ENCODE measurements at regions of chr11 and their contacts with region 1.

Region 1: DNA sequence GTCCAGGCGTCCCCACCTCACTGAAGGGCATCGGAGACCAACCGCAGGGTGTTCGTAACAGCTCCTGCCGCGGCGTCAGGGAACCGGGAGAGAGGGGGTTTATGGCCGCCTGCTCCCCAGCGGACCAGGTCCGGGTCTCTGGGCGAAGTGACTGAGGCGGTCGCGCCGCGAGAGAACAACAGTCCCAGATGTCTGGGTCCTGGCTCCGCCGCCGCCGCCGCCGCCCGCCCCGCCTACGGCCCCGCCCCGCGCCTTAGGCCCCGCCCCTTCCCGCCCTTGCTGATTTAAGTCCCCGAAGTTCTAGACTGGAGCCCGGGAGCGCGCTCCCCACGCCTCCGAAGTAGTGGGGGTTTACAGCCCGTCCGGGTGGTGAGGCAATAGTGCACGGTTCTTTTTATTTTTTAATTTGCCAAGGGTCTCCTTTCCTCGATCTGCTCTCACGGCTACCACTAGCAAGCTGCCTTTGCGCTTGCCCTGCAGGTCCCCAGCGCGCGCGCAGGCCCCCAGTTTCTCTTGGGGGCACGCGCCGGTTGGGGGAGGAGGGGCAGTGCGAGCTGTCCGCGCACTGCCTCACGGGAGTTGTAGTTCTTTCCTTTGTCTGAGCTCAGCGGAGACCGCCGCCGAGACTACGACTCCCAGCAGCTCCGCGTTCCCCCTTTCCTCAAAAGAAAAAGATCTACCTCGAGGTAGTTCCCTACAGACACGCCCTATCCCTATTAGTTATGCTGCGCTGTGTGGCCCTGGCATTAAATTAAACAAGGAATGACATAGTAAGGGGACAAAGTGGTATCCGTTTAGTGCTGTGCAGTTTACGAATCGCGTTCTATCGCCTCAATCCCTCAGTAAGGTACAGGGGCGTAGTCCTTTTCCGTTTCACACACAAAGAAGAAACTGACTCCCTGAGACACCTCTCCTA is at the start of gene PGM2L1:
- DNase-seq: peak; percentile 86 to 97
- H3K4me3 ChIP-seq: peak within 1 kb of the TSS; percentile 92 to 95
- H3K27ac ChIP-seq: peak within 1 kb of the TSS; percentile 83 to 86
- H3K4me1 ChIP-seq: no peaks in the 10 kb centered on the region
- H3K27me3 ChIP-seq: no peaks in the 10 kb centered on the region
- CTCF ChIP-seq: no peak
- total RNA-seq, gene PGM2L1: 8.4 TPM

Region 2: GRCh38 chr11:74090701-74091100 is 307.8 kb before region 1 on chr11:
- intact Hi-C with region 1: no loop called
- DNase-seq: no peak
- H3K4me3 ChIP-seq: no peak overlapping the region
- H3K27ac ChIP-seq: no peak overlapping the region
- H3K4me1 ChIP-seq: no peaks in the 10 kb centered on the region
- H3K27me3 ChIP-seq: no peaks in the 10 kb centered on the region
- CTCF ChIP-seq: no peak

Region 3: GRCh38 chr11:74179234-74180052 is 219.1 kb before region 1 on chr11:
- intact Hi-C with region 1: no loop called
- DNase-seq: no peak
- H3K4me3 ChIP-seq: no peak overlapping the region
- H3K27ac ChIP-seq: peak overlapping the region; percentile 31 to 51
- H3K4me1 ChIP-seq: peaks cover 0 to 9% of the 10 kb centered on the region in 2 donors
- H3K27me3 ChIP-seq: no peaks in the 10 kb centered on the region
- CTCF ChIP-seq: no peak

Region 4: DNA sequence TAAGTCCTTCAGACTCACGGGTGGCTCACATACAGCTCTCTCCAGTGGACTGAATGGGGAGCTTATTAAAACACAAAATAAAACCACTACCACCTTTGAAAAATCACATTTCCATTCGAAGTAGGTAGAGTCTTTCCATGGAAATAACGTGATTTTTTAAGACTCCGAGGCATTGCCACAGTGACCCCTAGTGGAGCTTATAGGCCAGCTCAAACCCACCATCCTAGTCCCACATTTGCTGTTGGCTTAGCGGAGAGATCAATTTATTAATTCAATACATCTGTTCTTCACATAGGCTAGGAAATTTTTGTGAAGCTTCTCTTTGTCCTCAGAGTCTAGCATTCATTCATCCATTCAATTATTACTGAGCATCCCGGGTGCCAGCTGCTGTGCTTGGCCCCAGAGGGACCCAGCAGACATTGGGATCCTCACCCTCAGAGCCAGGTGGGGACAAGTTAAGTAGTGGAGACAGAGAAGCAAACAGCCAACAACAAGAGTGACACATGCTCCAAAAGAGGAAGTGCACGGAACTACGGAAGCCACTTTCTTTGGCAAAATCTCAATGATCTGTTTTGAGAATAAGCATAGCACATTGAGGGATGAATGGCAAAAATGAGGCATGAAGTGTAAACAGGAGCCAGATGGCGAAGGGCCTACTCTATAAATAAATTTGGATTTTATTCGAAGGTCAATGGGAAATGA is 76.9 kb before region 1 on chr11:
- intact Hi-C with region 1: loop called (anchors 2 kb)
- DNase-seq: peak in 1 of 2 donors; percentile 77
- H3K4me3 ChIP-seq: no peak overlapping the region
- H3K27ac ChIP-seq: peak overlapping the region; percentile 7 to 57
- H3K4me1 ChIP-seq: peaks cover 6 to 43% of the 10 kb centered on the region in 2 donors
- H3K27me3 ChIP-seq: no peaks in the 10 kb centered on the region
- CTCF ChIP-seq: peak in 1 of 3 experiments; percentile 60

Region 5: DNA sequence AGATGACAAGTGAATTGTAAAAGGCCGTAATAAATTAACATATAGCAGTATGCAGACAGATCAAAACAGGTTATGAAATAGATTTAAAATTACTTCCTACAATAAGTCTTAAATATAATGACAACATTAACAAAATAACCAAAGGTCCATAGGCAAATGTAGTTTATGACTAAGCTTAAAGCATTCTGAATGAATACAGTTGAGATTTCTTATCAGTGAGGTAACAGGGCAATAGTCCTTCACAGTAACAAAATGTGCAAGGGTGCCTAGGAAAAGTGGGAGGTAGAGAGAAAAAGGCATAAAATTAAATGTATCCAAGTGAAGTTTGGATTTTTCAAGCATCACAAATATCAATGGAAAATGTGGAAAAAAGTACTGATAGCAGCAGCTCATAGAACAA is 66.2 kb before region 1 on chr11:
- intact Hi-C with region 1: no loop called
- DNase-seq: no peak
- H3K4me3 ChIP-seq: no peak overlapping the region
- H3K27ac ChIP-seq: no peak overlapping the region
- H3K4me1 ChIP-seq: peaks cover 0 to 10% of the 10 kb centered on the region in 2 donors
- H3K27me3 ChIP-seq: no peaks in the 10 kb centered on the region
- CTCF ChIP-seq: no peak

Region 6: GRCh38 chr11:74418509-74418895 is 20.0 kb after region 1 on chr11:
- intact Hi-C with region 1: loop called (anchors 1 kb)
- DNase-seq: no peak
- H3K4me3 ChIP-seq: no peak overlapping the region
- H3K27ac ChIP-seq: peak overlapping the region; percentile 84 to 94
- H3K4me1 ChIP-seq: peaks cover 6 to 11% of the 10 kb centered on the region in 2 donors
- H3K27me3 ChIP-seq: no peaks in the 10 kb centered on the region
- CTCF ChIP-seq: no peak

Region 7: GRCh38 chr11:74492974-74493790 is 94.7 kb after region 1 on chr11 and contains the start of gene LIPT2:
- intact Hi-C with region 1: loop called (anchors 1 kb)
- DNase-seq: peak; percentile 89 to 97
- H3K4me3 ChIP-seq: peak within 1 kb of the TSS; percentile 64 to 95
- H3K27ac ChIP-seq: peak within 1 kb of the TSS; percentile 90 to 99
- H3K4me1 ChIP-seq: peaks cover 0 to 6% of the 10 kb centered on the region in 2 donors
- H3K27me3 ChIP-seq: no peaks in the 10 kb centered on the region
- CTCF ChIP-seq: no peak
- total RNA-seq, gene LIPT2: not detected

Region 8: DNA sequence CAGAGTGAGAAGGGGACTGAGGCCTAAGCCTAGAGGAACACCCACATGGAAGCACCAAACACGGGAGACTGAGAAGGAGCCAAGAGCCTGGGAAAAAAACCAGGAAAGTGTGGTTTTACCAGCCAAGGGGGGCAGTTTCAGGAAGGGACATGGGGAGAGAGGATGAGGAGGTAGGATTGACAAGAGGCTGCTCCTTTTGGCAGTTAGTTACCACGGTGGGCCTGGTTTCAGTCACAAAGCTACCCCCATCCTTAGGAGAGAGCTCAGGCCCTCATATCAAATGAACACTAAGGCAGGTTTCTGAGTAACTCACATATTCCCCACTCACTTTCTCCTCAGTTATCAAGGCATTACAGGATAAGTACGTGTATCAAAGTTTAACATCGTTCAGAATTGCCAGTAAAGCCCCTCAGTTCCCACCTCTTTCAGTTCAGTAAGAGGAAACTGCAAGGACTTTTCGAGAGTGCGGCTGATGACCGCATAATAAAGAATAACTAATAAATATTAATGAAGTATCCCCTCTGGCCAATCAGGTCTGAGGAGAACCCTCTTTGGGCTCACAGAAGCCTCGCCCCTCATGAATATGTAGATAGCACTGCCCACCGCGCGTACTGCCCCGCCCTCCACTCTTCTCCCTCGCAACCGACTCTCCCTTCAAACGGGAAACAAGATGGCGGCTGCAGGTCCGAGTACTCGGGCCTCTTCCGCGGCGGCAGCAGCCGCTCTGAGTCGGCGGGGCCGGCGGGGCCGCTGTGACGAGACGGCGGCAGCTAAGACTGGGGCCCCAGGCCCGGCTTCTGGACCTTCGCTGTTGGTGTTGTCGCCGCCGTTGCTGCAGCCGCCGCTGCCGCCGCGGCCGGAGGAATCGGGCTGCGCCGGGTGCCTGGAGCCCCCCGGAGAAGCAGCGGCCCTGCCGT is 350.0 kb after region 1 on chr11 and contains the start of gene RNF169:
- intact Hi-C with region 1: loop called (anchors 5 kb)
- DNase-seq: peak; percentile 90 to 98
- H3K4me3 ChIP-seq: peak within 1 kb of the TSS; percentile 72 to 97
- H3K27ac ChIP-seq: peak within 1 kb of the TSS; percentile 89 to 91
- H3K4me1 ChIP-seq: peaks cover 0 to 16% of the 10 kb centered on the region in 2 donors
- H3K27me3 ChIP-seq: no peaks in the 10 kb centered on the region
- CTCF ChIP-seq: no peak
- total RNA-seq, gene RNF169: 19.5 TPM